Activated T-helper 1 cell treated with anti-CD3 and anti-CD28 coated beads, Interleukin-12 subunit alpha, Interleukin-12 subunit beta, Interleukin-2, Interleukin-4 antibody, amounts not matched to agents 30 ng/mL and 10 ng/mL and 1 ng/mL, durations not matched to agents 14 hours and 24 hours and 36 hours (primary cell): ENCODE measurements at regions of chr5 and their contacts with region 1.

Region 1: GRCh38 chr5:151659001-151659754 is 27.5 kb downstream of the SPARC start:
- DNase-seq: peak; percentile 68
- H3K4me3 Mint-ChIP-seq: no peak overlapping the region
- H3K27ac Mint-ChIP-seq: no peak overlapping the region
- H3K4me1 Mint-ChIP-seq: peaks cover 12% of the 10 kb centered on the region
- H3K27me3 Mint-ChIP-seq: peaks cover 12% of the 10 kb centered on the region

Region 2: GRCh38 chr5:150106674-150107426 is 1552.3 kb before region 1 on chr5:
- intact Hi-C with region 1: no loop called
- DNase-seq: no peak
- H3K4me3 Mint-ChIP-seq: no peak overlapping the region
- H3K27ac Mint-ChIP-seq: no peak overlapping the region
- H3K4me1 Mint-ChIP-seq: peaks cover 6% of the 10 kb centered on the region
- H3K27me3 Mint-ChIP-seq: peaks cover 9% of the 10 kb centered on the region

Region 3: DNA sequence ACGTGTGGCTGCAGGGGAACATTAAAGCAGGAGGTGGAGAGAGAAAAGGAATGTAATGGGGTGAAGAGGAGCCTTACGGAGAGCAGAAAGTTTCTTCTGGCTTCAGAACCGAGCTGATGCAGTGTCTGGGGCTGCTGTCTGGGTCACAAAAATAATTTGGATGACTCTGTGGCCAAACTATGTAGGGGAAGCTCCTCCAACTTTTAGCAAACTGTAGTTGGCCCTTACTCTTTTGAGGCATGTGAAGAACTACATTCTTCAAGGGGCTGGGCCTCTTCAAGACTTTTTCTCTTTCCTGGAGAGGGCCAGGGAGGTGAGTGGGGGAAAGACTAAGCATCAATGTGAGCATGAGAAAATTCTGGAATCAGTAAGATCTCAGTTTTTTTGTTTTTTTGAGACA is 59.5 kb after region 1 on chr5:
- intact Hi-C with region 1: loop called (anchors 1 kb)
- DNase-seq: no peak
- H3K4me3 Mint-ChIP-seq: no peak overlapping the region
- H3K27ac Mint-ChIP-seq: no peak overlapping the region
- H3K4me1 Mint-ChIP-seq: peaks cover 15% of the 10 kb centered on the region
- H3K27me3 Mint-ChIP-seq: no peaks in the 10 kb centered on the region

Region 4: GRCh38 chr5:151740336-151740942 is 81.3 kb after region 1 on chr5:
- intact Hi-C with region 1: loop called (anchors 1 kb)
- DNase-seq: peak; percentile 37
- H3K4me3 Mint-ChIP-seq: no peak overlapping the region
- H3K27ac Mint-ChIP-seq: no peak overlapping the region
- H3K4me1 Mint-ChIP-seq: peaks cover 23% of the 10 kb centered on the region
- H3K27me3 Mint-ChIP-seq: no peaks in the 10 kb centered on the region

Region 5: DNA sequence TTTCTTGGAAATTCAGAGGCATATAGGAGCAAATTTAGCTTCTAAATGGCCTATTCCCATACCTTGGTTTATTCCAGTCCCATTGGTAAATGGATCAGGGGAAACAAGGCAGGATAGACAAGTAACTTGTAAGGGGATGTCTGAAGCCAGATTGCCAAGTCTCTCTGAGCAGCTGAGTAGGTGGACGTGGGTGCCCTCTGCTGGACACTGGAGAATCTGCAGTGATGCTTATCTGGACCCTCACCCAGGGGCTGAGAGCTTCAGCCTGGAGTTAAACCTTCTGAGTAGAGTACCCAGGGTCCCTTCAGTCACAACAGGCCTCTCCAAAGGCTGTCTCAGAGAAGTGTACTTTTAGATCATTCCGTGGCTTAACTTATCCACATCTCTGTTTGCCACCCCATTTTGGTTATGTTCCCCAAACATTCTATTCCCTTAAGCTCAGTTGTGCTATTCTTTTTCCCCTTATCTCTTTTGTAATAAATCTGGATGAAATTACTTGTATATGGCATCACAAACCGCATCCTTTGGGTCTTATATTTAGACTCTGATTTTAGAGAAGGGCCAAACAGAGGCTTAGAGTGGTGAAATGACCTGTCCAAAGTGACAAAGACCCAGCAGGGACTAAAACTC is 483.8 kb after region 1 on chr5:
- intact Hi-C with region 1: loop called (anchors 1 kb)
- DNase-seq: peak; percentile 21
- H3K4me3 Mint-ChIP-seq: no peak overlapping the region
- H3K27ac Mint-ChIP-seq: no peak overlapping the region
- H3K4me1 Mint-ChIP-seq: no peaks in the 10 kb centered on the region
- H3K27me3 Mint-ChIP-seq: peaks cover 2% of the 10 kb centered on the region

Region 6: GRCh38 chr5:152349683-152350526 is 690.7 kb after region 1 on chr5:
- intact Hi-C with region 1: loop called (anchors 5 kb)
- DNase-seq: no peak
- H3K4me3 Mint-ChIP-seq: no peak overlapping the region
- H3K27ac Mint-ChIP-seq: no peak overlapping the region
- H3K4me1 Mint-ChIP-seq: no peaks in the 10 kb centered on the region
- H3K27me3 Mint-ChIP-seq: peaks cover 1% of the 10 kb centered on the region

Region 7: GRCh38 chr5:152505442-152506042 is 846.4 kb after region 1 on chr5:
- intact Hi-C with region 1: loop called (anchors 10 kb)
- DNase-seq: no peak
- H3K4me3 Mint-ChIP-seq: no peak overlapping the region
- H3K27ac Mint-ChIP-seq: no peak overlapping the region
- H3K4me1 Mint-ChIP-seq: no peaks in the 10 kb centered on the region
- H3K27me3 Mint-ChIP-seq: peaks cover 5% of the 10 kb centered on the region

Region 8: DNA sequence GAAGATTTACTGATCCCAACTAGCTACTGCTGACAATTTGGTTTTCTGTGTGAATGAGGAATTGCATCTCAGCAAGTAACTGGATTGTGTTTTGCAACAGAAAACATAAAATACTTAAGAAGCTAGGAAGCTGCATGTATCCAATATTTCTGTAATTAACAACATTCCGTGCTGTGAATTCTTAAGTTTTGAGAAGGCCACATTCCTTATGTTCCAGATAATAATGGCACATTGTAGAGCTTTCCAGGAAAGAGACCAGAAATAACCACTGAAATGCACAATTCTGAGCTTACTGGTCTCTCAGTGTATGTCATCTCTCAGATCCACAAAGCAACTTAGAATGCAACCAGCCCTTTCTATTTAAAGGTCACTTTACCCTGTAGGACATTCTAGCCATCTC is 1052.8 kb after region 1 on chr5:
- intact Hi-C with region 1: no loop called
- DNase-seq: no peak
- H3K4me3 Mint-ChIP-seq: no peak overlapping the region
- H3K27ac Mint-ChIP-seq: no peak overlapping the region
- H3K4me1 Mint-ChIP-seq: no peaks in the 10 kb centered on the region
- H3K27me3 Mint-ChIP-seq: no peaks in the 10 kb centered on the region